Dorsolateral prefrontal cortex (tissue), 120 donors: ENCODE measurements at regions of chr19 and their contacts with region 1.

Region 1: DNA sequence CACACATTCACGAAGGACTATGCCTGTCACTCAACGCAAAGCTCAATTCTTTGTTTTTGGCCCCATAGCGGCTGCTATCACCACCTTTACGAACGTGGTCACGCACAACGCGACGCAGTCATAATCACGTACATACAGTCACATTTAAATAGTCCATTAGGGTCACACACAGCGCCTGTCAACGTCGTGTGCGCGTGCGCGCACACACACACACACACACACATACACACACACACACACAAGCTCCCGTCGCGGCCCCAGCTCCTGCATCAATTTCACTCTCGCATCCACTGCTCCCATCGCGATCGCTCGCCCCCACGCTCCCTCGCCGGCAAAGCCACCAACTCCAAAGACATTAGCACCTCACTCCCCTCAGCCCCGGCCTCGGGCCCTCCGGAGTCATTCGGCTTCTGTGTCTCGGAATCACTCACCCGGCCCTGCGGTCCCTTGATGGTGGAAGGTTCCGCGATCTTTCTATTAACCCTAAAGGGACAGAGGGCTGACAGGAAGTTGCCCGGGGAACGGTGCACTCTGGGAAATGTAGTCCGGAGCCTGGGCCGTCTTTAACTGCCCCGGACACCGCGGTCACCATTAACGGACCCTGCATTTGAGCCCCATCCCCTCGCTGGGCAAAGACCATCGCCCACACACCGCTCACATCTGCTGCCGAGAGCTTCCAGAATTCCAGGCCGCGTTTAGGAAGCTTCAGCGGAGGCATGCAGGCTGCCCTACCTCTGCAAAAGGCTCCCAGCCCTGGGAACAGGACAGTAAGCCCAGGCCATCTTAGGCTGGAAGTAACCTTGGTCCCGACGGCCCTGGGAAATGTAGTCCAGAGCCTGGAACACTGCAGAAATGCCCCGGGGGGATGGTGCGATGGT is at the start of gene ZNF790:
- DNase-seq: peak; percentile 87 to 95 (median 93)
- H3K4me3 ChIP-seq: peak within 1 kb of the TSS; percentile 65 to 99 (median 82)
- H3K27ac ChIP-seq: peak within 1 kb of the TSS; percentile 79 to 99 (median 94)
- H3K27me3 ChIP-seq: no peaks in the 10 kb centered on the region
- CTCF ChIP-seq: peak in 7 of 56 donors; percentile 13 to 28 (median 17)
- total RNA-seq, gene ZNF790: 8.6 to 21.8 (median 12.8) TPM

Region 2: DNA sequence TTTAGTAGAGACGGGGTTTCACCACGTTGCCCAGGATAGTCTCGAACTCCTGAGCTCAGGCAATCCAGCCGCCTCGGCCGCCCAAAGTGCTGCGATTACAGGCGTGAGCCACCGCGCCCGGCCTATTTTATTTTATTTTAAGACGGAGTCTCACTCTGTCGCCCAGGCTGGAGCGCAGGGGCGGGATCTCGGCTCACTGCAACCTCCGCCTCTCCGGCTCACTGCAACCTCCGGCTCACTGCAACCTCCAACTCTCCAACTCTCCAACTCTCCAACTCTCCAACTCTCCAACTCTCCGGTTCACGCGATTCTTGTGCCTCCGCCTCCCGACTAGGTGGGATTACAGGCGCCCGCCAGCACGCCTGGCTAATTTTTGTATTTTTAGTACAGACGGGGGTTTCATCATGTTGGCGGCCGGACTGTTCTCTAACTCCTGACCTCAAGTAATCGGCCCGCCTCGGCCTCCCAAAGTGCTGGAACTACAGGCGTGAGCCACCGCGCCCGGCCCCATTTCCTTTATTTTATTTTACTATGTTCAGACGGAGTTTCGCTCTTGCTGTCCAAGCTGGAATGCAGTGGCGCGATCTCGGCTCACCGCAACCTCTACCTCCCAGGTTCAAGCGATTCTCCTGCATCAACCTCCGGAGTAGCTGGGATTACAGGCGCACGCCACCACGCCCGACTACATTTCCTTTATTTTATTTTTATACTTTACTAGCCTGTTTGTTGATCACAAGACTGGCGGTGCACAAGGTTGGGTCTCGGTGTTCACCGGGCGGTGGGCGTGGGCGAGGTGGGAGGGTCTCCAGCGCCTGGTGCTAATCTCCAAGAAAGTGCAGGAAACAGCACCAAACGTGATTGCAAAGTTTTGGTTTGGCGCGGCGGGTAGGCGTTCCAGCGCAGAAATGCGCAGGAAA is 41.8 kb before region 1 on chr19:
- intact Hi-C with region 1: loop called in 1 of 2 experiments (anchors 5 kb)
- DNase-seq: no peak
- H3K4me3 ChIP-seq: peak overlapping the region; percentile 49 to 95 (median 80)
- H3K27ac ChIP-seq: peak overlapping the region in 36 of 59 donors; percentile 4 to 82 (median 69)
- H3K27me3 ChIP-seq: no peaks in the 10 kb centered on the region
- CTCF ChIP-seq: no peak